Heart right ventricle (tissue), 16 donors: ENCODE measurements at regions of chr7 and their contacts with region 1.

Region 1: DNA sequence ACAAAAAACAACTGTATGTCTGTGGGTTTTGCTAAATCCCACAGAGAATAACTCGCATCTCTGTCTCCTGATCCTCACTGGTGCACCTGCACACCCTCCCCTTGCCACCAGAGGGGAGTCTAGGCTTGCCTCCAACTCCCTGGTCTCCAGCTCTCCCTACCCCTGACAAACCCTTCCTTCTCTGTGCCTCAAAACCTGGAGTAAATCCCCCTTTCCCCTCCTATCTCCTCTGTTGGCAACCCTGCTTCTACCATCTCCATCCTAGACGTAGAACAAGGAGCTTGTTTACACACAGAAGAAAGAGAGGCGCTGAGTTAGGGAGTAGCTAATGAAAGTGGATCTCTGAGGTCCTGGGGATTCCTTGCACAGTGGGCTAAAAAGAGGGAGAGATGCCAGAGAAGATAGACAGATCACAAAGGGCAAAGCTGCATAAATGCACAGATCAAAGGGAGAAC is 6.0 kb downstream of the MBLAC1 start:
- DNase-seq: peak in 1 of 2 donors; percentile 39
- ATAC-seq: peak in 7 of 8 donors; percentile 69 to 83 (median 80)
- H3K4me3 ChIP-seq: no peak overlapping the region
- H3K27ac ChIP-seq: no peak overlapping the region
- H3K4me1 ChIP-seq: peaks cover 3 to 18% (median 8%) of the 10 kb centered on the region in 9 donors
- H3K27me3 ChIP-seq: peaks cover 0 to 6% (median 0%) of the 10 kb centered on the region in 7 donors
- CTCF ChIP-seq: peak; percentile 40 to 89 (median 79)

Region 2: GRCh38 chr7:99918959-99919813 is 213.5 kb before region 1 on chr7 and contains the start of gene TRIM4:
- intact Hi-C with region 1: loop called in 2 of 10 experiments (anchors 5 to 10 kb)
- DNase-seq: peak; percentile 90 to 91
- ATAC-seq: peak; percentile 99 to 100 (median 99)
- H3K4me3 ChIP-seq: peak within 1 kb of the TSS; percentile 70 to 94 (median 90)
- H3K27ac ChIP-seq: peak within 1 kb of the TSS; percentile 63 to 96 (median 90)
- H3K4me1 ChIP-seq: peaks cover 0 to 38% (median 36%) of the 10 kb centered on the region in 9 donors
- H3K27me3 ChIP-seq: no peaks in the 10 kb centered on the region
- CTCF ChIP-seq: peak in 5 of 9 donors; percentile 17 to 54 (median 49)
- total RNA-seq, gene TRIM4: 5.0 to 9.6 (median 6.6) TPM

Region 3: GRCh38 chr7:99997545-99998137 is 135.1 kb before region 1 on chr7:
- intact Hi-C with region 1: loop called in 7 of 10 experiments (anchors 5 kb)
- DNase-seq: peak; percentile 50 to 71
- ATAC-seq: peak; percentile 67 to 85 (median 82)
- H3K4me3 ChIP-seq: peak overlapping the region; percentile 13 to 68 (median 61)
- H3K27ac ChIP-seq: peak overlapping the region; percentile 54 to 93 (median 85)
- H3K4me1 ChIP-seq: peaks cover 0 to 25% (median 17%) of the 10 kb centered on the region in 9 donors
- H3K27me3 ChIP-seq: no peaks in the 10 kb centered on the region
- CTCF ChIP-seq: peak in 7 of 9 donors; percentile 29 to 60 (median 45)

Region 4: GRCh38 chr7:100049441-100050311 is 83.0 kb before region 1 on chr7 and contains the start of gene ZSCAN21:
- intact Hi-C with region 1: no loop called
- DNase-seq: peak; percentile 85 to 89
- ATAC-seq: peak; percentile 95 to 99 (median 98)
- H3K4me3 ChIP-seq: peak within 1 kb of the TSS; percentile 69 to 92 (median 84)
- H3K27ac ChIP-seq: peak within 1 kb of the TSS; percentile 90 to 98 (median 96)
- H3K4me1 ChIP-seq: peaks cover 4 to 24% (median 12%) of the 10 kb centered on the region in 9 donors
- H3K27me3 ChIP-seq: no peaks in the 10 kb centered on the region
- CTCF ChIP-seq: peak in 4 of 9 donors; percentile 30 to 48 (median 45)
- total RNA-seq, gene ZSCAN21: 5.4 to 10.0 (median 6.9) TPM

Region 5: GRCh38 chr7:100215895-100216294 is 83.2 kb after region 1 on chr7:
- intact Hi-C with region 1: loop called (anchors 2 to 5 kb)
- DNase-seq: peak; percentile 40 to 43
- ATAC-seq: peak; percentile 32 to 81 (median 64)
- H3K4me3 ChIP-seq: no peak overlapping the region
- H3K27ac ChIP-seq: peak overlapping the region in 1 of 10 donors; percentile 18
- H3K4me1 ChIP-seq: peaks cover 0 to 10% (median 6%) of the 10 kb centered on the region in 9 donors
- H3K27me3 ChIP-seq: no peaks in the 10 kb centered on the region
- CTCF ChIP-seq: no peak

Region 6: GRCh38 chr7:100342765-100343164 is 210.0 kb after region 1 on chr7:
- intact Hi-C with region 1: loop called in 2 of 10 experiments (anchors 10 kb)
- DNase-seq: peak in 1 of 2 donors; percentile 37
- ATAC-seq: peak in 6 of 8 donors; percentile 31 to 72 (median 56)
- H3K4me3 ChIP-seq: no peak overlapping the region
- H3K27ac ChIP-seq: peak overlapping the region in 6 of 10 donors; percentile 9 to 37 (median 22)
- H3K4me1 ChIP-seq: peaks cover 0 to 34% (median 16%) of the 10 kb centered on the region in 9 donors
- H3K27me3 ChIP-seq: no peaks in the 10 kb centered on the region
- CTCF ChIP-seq: no peak